HAP-1 (cell line): ENCODE measurements at regions of chr16 and their contacts with region 1.

Region 1: GRCh38 chr16:9134739-9135138 is 43.3 kb downstream of the HAPSTR1 start:
- DNase-seq: peak in 1 of 2 experiments; percentile 75
- H3K4me3 ChIP-seq: no peak overlapping the region
- H3K4me1 ChIP-seq: no peaks in the 10 kb centered on the region
- H3K27me3 ChIP-seq: no peaks in the 10 kb centered on the region

Region 2: GRCh38 chr16:8674413-8675022 is 460.2 kb before region 1 on chr16 and contains the start of gene ABAT:
- in situ Hi-C with region 1: loop called (anchors 25 kb)
- DNase-seq: peak; percentile 85 to 92
- H3K4me3 ChIP-seq: peak within 1 kb of the TSS; percentile 62
- H3K4me1 ChIP-seq: peaks cover 5% of the 10 kb centered on the region; the same call in 1 of the 2 replicates
- H3K27me3 ChIP-seq: no peaks in the 10 kb centered on the region

Region 3: GRCh38 chr16:9042964-9043680 is 91.6 kb before region 1 on chr16:
- in situ Hi-C with region 1: loop called (anchors 5 kb)
- DNase-seq: no peak
- H3K4me3 ChIP-seq: no peak overlapping the region
- H3K4me1 ChIP-seq: peaks cover 7% of the 10 kb centered on the region
- H3K27me3 ChIP-seq: no peaks in the 10 kb centered on the region